Activated naive CD4-positive, alpha-beta T cell treated with anti-CD3 and anti-CD28 coated beads for 36 hours (primary cell): ENCODE measurements at regions of chr16 and their contacts with region 1.

Region 1: GRCh38 chr16:648781-649589 is at the start of gene WDR90:
- DNase-seq: peak; percentile 93
- H3K4me3 Mint-ChIP-seq: peak within 1 kb of the TSS; percentile 79
- H3K27ac Mint-ChIP-seq: peak within 1 kb of the TSS; percentile 66
- H3K4me1 Mint-ChIP-seq: peaks cover 22% of the 10 kb centered on the region
- H3K27me3 Mint-ChIP-seq: no peaks in the 10 kb centered on the region
- total RNA-seq, gene WDR90: 65.9 to 66.9 TPM

Region 2: GRCh38 chr16:546909-547770 is 101.8 kb before region 1 on chr16:
- CTCF ChIA-PET with region 1: no interaction called
- intact Hi-C with region 1: no loop called
- DNase-seq: peak; percentile 62
- H3K4me3 Mint-ChIP-seq: no peak overlapping the region
- H3K27ac Mint-ChIP-seq: no peak overlapping the region
- H3K4me1 Mint-ChIP-seq: peaks cover 2% of the 10 kb centered on the region
- H3K27me3 Mint-ChIP-seq: no peaks in the 10 kb centered on the region

Region 3: GRCh38 chr16:636206-637080 is 12.5 kb before region 1 on chr16 and contains the start of gene METTL26:
- CTCF ChIA-PET with region 1: interaction called, 6 read pairs
- intact Hi-C with region 1: loop called (anchors 1 kb)
- DNase-seq: peak; percentile 95
- H3K4me3 Mint-ChIP-seq: peak within 1 kb of the TSS; percentile 90
- H3K27ac Mint-ChIP-seq: peak within 1 kb of the TSS; percentile 91
- H3K4me1 Mint-ChIP-seq: peaks cover 15% of the 10 kb centered on the region
- H3K27me3 Mint-ChIP-seq: no peaks in the 10 kb centered on the region
- total RNA-seq, gene METTL26: 121 to 122 TPM

Region 4: DNA sequence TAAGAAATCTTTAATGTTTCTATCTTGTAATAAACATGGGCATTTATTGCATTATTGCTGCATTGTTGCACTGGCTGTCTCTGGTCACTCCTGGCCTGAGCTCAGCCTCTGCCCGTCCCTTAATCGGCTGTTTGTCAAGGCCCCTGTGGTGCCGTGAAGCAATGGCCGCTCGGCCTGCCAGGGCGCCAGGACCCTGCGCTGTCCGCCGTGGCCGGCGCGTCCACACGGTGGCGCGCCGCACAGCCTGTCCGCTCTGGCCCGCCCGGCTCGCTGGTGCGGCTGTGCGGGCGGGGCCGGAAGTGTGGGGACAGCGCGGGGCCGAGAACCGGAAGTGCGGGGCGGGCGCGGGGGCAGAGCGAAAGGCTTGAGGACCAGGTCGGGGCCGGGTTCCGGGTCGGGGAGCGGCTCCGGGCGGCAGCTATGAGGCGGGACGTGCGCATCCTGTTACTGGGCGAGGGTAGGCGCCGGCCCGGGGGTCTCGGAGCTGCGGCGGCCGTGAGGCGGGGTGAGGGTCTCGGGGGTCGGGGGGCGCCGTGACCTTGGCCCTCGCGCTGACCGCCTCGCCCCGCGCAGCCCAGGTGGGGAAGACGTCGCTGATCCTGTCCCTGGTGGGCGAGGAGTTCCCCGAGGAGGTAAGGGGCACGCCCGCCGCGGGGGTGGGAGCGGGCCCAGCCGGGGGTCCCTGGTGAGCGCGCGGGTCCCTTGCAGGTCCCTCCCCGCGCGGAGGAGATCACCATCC is 19.0 kb after region 1 on chr16 and contains the start of gene RHOT2:
- CTCF ChIA-PET with region 1: no interaction called
- intact Hi-C with region 1: loop called (anchors 1 kb)
- DNase-seq: peak; percentile 94
- H3K4me3 Mint-ChIP-seq: peak within 1 kb of the TSS; percentile 78
- H3K27ac Mint-ChIP-seq: peak within 1 kb of the TSS; percentile 83
- H3K4me1 Mint-ChIP-seq: peaks cover 11% of the 10 kb centered on the region
- H3K27me3 Mint-ChIP-seq: no peaks in the 10 kb centered on the region
- total RNA-seq, gene RHOT2: 81.9 to 84.0 TPM

Region 5: GRCh38 chr16:733382-734207 is 84.6 kb after region 1 on chr16:
- CTCF ChIA-PET with region 1: no interaction called
- intact Hi-C with region 1: no loop called
- DNase-seq: peak; percentile 42
- H3K4me3 Mint-ChIP-seq: no peak overlapping the region
- H3K27ac Mint-ChIP-seq: no peak overlapping the region
- H3K4me1 Mint-ChIP-seq: peaks cover 12% of the 10 kb centered on the region
- H3K27me3 Mint-ChIP-seq: no peaks in the 10 kb centered on the region

Region 6: GRCh38 chr16:1002399-1003161 is 353.6 kb after region 1 on chr16:
- CTCF ChIA-PET with region 1: no interaction called
- intact Hi-C with region 1: no loop called
- DNase-seq: peak; percentile 94
- H3K4me3 Mint-ChIP-seq: no peak overlapping the region
- H3K27ac Mint-ChIP-seq: peak overlapping the region; percentile 72
- H3K4me1 Mint-ChIP-seq: peaks cover 63% of the 10 kb centered on the region
- H3K27me3 Mint-ChIP-seq: no peaks in the 10 kb centered on the region